ENCODE measurements at regions of chr3 and their contacts with region 1.

Region 1: GRCh38 chr3:16060358-16060852 is 114.1 kb upstream of the GALNT15 start:
- DNase-seq: peak; percentile 82
- H3K4me3 ChIP-seq: no peak overlapping the region
- H3K27ac ChIP-seq: peak overlapping the region; percentile 97
- H3K4me1 ChIP-seq: peaks cover 57% of the 10 kb centered on the region
- H3K27me3 ChIP-seq: no peaks in the 10 kb centered on the region
- CTCF ChIP-seq: peak; percentile 4 to 45
- POLR2A ChIP-seq: peak; percentile 35

Region 2: DNA sequence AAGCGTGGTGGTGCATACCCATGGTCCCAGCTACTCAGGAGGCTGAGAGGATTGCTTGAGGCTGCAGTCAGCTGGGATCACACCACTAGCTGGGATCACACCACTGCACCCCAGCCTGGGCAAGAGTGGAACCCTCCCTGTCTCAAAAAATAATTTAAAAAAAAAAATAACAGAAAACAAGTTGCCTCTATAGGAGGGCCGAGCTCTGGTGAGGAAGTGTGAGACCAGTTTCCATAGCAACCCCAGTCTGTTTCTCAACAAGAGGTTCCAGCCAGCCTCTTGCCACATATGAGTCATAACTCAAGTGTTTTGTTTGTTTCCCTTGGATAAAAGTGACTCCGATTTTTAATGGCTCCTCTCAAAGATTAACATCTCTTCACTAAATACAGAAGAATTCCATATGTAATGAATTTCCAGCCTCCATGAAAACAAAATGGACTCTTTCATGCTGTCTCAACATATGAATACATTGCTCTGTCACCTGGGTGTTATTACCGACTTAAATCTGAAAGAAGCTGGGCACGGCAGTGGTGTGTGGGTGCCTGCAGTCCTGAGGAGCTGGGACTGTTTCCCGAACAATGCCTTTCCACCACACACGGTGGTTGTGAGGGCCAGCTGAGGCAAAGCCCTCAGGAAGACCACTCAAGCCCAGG is 1915.9 kb before region 1 on chr3:
- CTCF ChIA-PET with region 1: no interaction called
- POLR2A ChIA-PET with region 1: no interaction called
- dilution Hi-C with region 1: no loop called
- intact Hi-C with region 1: loop called (anchors 5 kb)
- DNase-seq: peak; percentile 97
- H3K4me3 ChIP-seq: peak overlapping the region in 1 of 3 experiments; percentile 20
- H3K27ac ChIP-seq: peak overlapping the region; percentile 100
- H3K4me1 ChIP-seq: peaks cover 41% of the 10 kb centered on the region
- H3K27me3 ChIP-seq: no peaks in the 10 kb centered on the region
- CTCF ChIP-seq: no peak
- POLR2A ChIP-seq: peak; percentile 69

Region 3: GRCh38 chr3:15647611-15648167 is 412.7 kb before region 1 on chr3:
- CTCF ChIA-PET with region 1: no interaction called
- POLR2A ChIA-PET with region 1: no interaction called
- dilution Hi-C with region 1: loop called (anchors 25 kb)
- intact Hi-C with region 1: loop called (anchors 1 kb)
- DNase-seq: peak; percentile 98
- H3K4me3 ChIP-seq: no peak overlapping the region
- H3K27ac ChIP-seq: peak overlapping the region; percentile 99
- H3K4me1 ChIP-seq: peaks cover 46% of the 10 kb centered on the region
- H3K27me3 ChIP-seq: no peaks in the 10 kb centered on the region
- CTCF ChIP-seq: no peak
- POLR2A ChIP-seq: peak; percentile 63

Region 4: DNA sequence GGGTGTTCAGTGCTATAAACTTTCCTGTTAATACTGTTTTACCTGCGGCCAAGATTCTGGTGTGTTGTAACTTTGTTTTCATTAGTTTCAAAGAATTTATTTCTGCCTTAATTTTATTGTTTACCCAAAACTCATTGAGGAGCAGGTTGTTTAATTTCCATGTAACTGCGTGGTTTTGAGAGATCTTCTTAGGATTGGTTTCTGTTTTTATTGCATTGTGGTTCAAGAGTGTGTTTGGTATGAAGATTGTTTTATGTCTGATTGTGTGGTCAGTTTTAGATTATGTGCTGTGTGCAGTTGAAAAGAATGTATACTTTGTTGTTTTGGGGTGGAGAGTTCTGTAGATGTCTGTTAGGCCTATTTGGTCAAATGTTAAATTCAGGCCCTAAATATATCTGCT is 19.4 kb before region 1 on chr3:
- CTCF ChIA-PET with region 1: no interaction called
- POLR2A ChIA-PET with region 1: no interaction called
- dilution Hi-C with region 1: no loop called
- intact Hi-C with region 1: no loop called
- DNase-seq: no peak
- H3K4me3 ChIP-seq: no peak overlapping the region
- H3K27ac ChIP-seq: no peak overlapping the region
- H3K4me1 ChIP-seq: no peaks in the 10 kb centered on the region
- H3K27me3 ChIP-seq: peaks cover 0 to 2% of the 10 kb centered on the region in 2 experiments
- CTCF ChIP-seq: no peak
- POLR2A ChIP-seq: no peak

Region 5: GRCh38 chr3:16090024-16090423 is 29.6 kb after region 1 on chr3:
- CTCF ChIA-PET with region 1: interaction called, 15 read pairs
- POLR2A ChIA-PET with region 1: interaction called, 5 read pairs
- dilution Hi-C with region 1: no loop called
- intact Hi-C with region 1: loop called (anchors 1 kb)
- DNase-seq: peak; percentile 80
- H3K4me3 ChIP-seq: no peak overlapping the region
- H3K27ac ChIP-seq: no peak overlapping the region
- H3K4me1 ChIP-seq: peaks cover 23% of the 10 kb centered on the region
- H3K27me3 ChIP-seq: no peaks in the 10 kb centered on the region
- CTCF ChIP-seq: no peak
- POLR2A ChIP-seq: no peak

Region 6: DNA sequence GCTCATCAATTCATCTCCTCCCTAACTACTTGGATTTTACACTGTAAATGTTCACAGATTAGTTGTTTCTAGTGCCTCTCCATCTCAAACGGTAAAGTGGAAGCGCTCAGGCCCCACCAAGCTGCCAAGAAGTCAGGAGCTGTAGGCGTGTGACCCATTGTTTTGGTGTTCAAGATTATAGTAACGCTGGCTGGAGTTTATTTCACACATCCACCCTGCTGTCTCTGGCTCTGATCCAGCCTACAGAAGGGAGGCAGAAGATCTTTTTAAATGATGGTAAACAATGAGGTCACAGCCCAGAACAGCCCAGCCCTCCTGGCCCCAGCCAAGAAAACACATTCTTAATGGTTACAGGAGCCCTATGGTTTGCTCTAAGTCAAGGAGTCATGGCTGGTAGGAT is 88.4 kb after region 1 on chr3:
- CTCF ChIA-PET with region 1: interaction called, 10 read pairs
- POLR2A ChIA-PET with region 1: no interaction called
- dilution Hi-C with region 1: no loop called
- intact Hi-C with region 1: no loop called
- DNase-seq: peak; percentile 95
- H3K4me3 ChIP-seq: no peak overlapping the region
- H3K27ac ChIP-seq: peak overlapping the region; percentile 31
- H3K4me1 ChIP-seq: peaks cover 10% of the 10 kb centered on the region
- H3K27me3 ChIP-seq: peaks cover 0 to 3% of the 10 kb centered on the region in 2 experiments
- CTCF ChIP-seq: no peak
- POLR2A ChIP-seq: no peak

Region 7: DNA sequence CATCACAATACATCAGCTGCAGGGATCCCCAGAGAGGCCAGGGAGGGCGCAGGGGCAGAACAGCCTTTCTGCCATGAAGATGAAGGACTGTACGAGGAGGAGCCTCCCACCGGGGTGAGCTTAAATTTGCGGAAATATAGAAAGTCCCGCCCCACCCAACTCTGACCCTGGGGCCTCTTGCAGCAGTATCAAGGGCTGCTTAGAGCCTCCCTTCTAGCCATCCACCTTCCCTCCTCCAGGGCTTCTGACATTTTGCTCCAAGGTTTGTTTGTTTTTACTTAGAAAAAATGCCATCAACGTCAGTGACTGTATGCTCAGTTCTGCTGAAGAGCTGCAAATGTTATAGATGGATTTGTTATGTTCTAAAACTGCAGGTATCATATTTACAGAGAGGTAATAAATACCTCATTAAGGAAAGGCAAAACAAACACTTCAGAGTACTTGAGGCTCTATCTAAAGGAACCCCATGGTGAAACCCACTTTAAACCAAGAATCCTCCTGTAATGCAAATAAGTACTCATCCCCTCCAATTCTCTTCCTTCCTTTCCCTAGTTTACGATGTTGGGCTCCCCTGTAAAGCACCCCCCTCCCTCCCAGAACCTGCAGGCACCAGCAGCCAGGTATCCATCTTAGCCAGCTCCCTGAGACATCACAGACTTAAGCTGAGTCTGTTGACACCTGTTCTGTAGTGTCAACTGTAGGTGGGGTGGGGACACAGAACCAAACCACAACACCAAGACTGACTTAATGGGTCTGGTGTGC is 422.5 kb after region 1 on chr3:
- CTCF ChIA-PET with region 1: no interaction called
- POLR2A ChIA-PET with region 1: no interaction called
- dilution Hi-C with region 1: no loop called
- intact Hi-C with region 1: loop called (anchors 5 kb)
- DNase-seq: no peak
- H3K4me3 ChIP-seq: no peak overlapping the region
- H3K27ac ChIP-seq: no peak overlapping the region
- H3K4me1 ChIP-seq: peaks cover 64% of the 10 kb centered on the region
- H3K27me3 ChIP-seq: no peaks in the 10 kb centered on the region
- CTCF ChIP-seq: no peak
- POLR2A ChIP-seq: no peak